CD8-positive, alpha-beta T cell (primary cell): ENCODE measurements at regions of chr19 and their contacts with region 1.

Region 1: DNA sequence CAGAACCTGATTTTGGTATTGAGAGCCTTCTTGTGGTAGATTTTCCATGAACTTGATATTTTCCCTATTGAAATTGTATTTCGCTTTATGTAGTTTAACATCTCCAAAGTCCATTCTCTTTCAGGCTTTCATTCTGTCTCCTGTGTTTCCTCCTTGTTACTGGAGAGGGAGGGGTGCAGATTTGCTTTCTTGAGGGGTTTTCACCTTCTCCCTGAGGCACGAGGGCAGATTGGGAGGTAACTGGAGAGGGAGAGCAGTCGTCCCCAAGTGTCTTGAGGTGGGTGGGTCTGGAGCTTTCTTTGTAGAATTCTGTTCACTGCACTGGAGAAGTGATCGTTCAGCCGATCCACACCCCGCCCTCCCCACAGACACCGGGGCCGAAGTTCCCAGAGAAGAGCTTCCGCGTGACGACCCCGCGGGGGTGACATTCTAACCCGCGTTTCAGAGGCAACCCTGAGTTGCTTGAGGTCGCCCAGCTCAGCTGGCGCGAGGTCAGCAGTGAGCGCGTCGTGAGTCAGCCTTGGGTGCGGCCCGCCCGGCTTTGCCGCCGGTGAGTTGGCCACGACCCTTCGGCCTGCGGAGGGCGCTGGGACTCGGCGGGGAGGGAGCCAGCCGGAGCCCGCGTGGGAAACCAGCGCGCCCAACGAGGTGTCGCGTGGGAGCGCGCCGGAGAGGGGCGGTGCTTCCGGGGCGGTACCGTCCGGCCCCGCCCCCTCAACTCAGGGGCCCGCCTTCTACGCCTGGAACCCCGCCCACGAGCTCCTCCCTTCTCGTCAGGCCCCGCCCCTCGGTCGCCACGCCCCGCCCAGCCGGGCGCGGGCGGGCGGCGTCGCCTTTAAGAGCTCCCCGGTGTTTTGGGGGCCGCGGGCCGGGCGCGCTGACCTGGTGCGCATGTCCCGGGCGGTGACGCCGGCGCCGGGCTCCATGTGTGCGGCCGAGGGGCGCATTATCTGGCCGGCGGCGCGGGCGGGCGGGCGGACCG is at the start of gene GATAD2A:
- DNase-seq: peak; percentile 81 to 98 (median 92)
- ATAC-seq: peak; percentile 89
- H3K4me3 ChIP-seq: peak within 1 kb of the TSS; percentile 67 to 85
- H3K4me3 Mint-ChIP-seq: peak within 1 kb of the TSS; percentile 97
- H3K27ac ChIP-seq: peak within 1 kb of the TSS; percentile 70 to 86
- H3K27ac Mint-ChIP-seq: peak within 1 kb of the TSS; percentile 89
- H3K4me1 ChIP-seq: peaks cover 44% of the 10 kb centered on the region
- H3K4me1 Mint-ChIP-seq: peaks cover 62% of the 10 kb centered on the region
- H3K27me3 ChIP-seq: no peaks in the 10 kb centered on the region
- H3K27me3 Mint-ChIP-seq: no peaks in the 10 kb centered on the region
- CTCF ChIP-seq: no peak
- total RNA-seq, gene GATAD2A: 135 to 142 TPM

Region 2: GRCh38 chr19:18995804-18996241 is 409.3 kb before region 1 on chr19:
- CTCF ChIA-PET with region 1: no interaction called
- POLR2A ChIA-PET with region 1: no interaction called
- intact Hi-C with region 1: no loop called
- DNase-seq: peak in 2 of 9 experiments; percentile 15 to 27
- ATAC-seq: no peak
- H3K4me3 ChIP-seq: no peak overlapping the region
- H3K4me3 Mint-ChIP-seq: no peak overlapping the region
- H3K27ac ChIP-seq: no peak overlapping the region
- H3K27ac Mint-ChIP-seq: no peak overlapping the region
- H3K4me1 ChIP-seq: peaks cover 21% of the 10 kb centered on the region
- H3K4me1 Mint-ChIP-seq: peaks cover 23% of the 10 kb centered on the region
- H3K27me3 ChIP-seq: no peaks in the 10 kb centered on the region
- H3K27me3 Mint-ChIP-seq: no peaks in the 10 kb centered on the region
- CTCF ChIP-seq: no peak

Region 3: GRCh38 chr19:19063183-19064097 is 341.7 kb before region 1 on chr19 and contains the start of gene SLC25A42:
- CTCF ChIA-PET with region 1: no interaction called
- POLR2A ChIA-PET with region 1: no interaction called
- intact Hi-C with region 1: loop called in 1 of 2 experiments (anchors 5 kb)
- DNase-seq: peak; percentile 97 to 100 (median 99)
- ATAC-seq: peak; percentile 90
- H3K4me3 ChIP-seq: peak within 1 kb of the TSS; percentile 61 to 87
- H3K4me3 Mint-ChIP-seq: peak within 1 kb of the TSS; percentile 89
- H3K27ac ChIP-seq: peak within 1 kb of the TSS; percentile 47 to 77
- H3K27ac Mint-ChIP-seq: peak within 1 kb of the TSS; percentile 88
- H3K4me1 ChIP-seq: peaks cover 23% of the 10 kb centered on the region
- H3K4me1 Mint-ChIP-seq: peaks cover 32% of the 10 kb centered on the region
- H3K27me3 ChIP-seq: no peaks in the 10 kb centered on the region
- H3K27me3 Mint-ChIP-seq: no peaks in the 10 kb centered on the region
- CTCF ChIP-seq: no peak
- total RNA-seq, gene SLC25A42: 8.3 to 10.6 TPM

Region 4: GRCh38 chr19:19320362-19321142 is 84.6 kb before region 1 on chr19 and contains the starts of genes MAU2 and SUGP1:
- CTCF ChIA-PET with region 1: no interaction called
- POLR2A ChIA-PET with region 1: interaction called, 3 read pairs
- intact Hi-C with region 1: loop called (anchors 1 kb)
- DNase-seq: peak; percentile 81 to 95 (median 88)
- ATAC-seq: peak; percentile 90
- H3K4me3 ChIP-seq: peak within 1 kb of the TSS; percentile 88 to 94
- H3K4me3 Mint-ChIP-seq: peak within 1 kb of the TSS; percentile 99
- H3K27ac ChIP-seq: peak within 1 kb of the TSS; percentile 88 to 97
- H3K27ac Mint-ChIP-seq: peak within 1 kb of the TSS; percentile 99
- H3K4me1 ChIP-seq: peaks cover 35% of the 10 kb centered on the region
- H3K4me1 Mint-ChIP-seq: peaks cover 40% of the 10 kb centered on the region
- H3K27me3 ChIP-seq: no peaks in the 10 kb centered on the region
- H3K27me3 Mint-ChIP-seq: no peaks in the 10 kb centered on the region
- CTCF ChIP-seq: no peak
- total RNA-seq, gene MAU2: 137 to 139 TPM
- total RNA-seq, gene SUGP1: 60.9 to 68.2 TPM

Region 5: GRCh38 chr19:19361075-19361594 is 44.0 kb before region 1 on chr19:
- CTCF ChIA-PET with region 1: interaction called, 16 read pairs
- POLR2A ChIA-PET with region 1: interaction called, 19 read pairs
- intact Hi-C with region 1: no loop called
- DNase-seq: peak; percentile 28 to 88 (median 69)
- ATAC-seq: peak; percentile 64
- H3K4me3 ChIP-seq: no peak overlapping the region
- H3K4me3 Mint-ChIP-seq: peak overlapping the region; percentile 36
- H3K27ac ChIP-seq: no peak overlapping the region
- H3K27ac Mint-ChIP-seq: peak overlapping the region; percentile 23
- H3K4me1 ChIP-seq: peaks cover 27% of the 10 kb centered on the region
- H3K4me1 Mint-ChIP-seq: peaks cover 37% of the 10 kb centered on the region
- H3K27me3 ChIP-seq: no peaks in the 10 kb centered on the region
- H3K27me3 Mint-ChIP-seq: no peaks in the 10 kb centered on the region
- CTCF ChIP-seq: peak; percentile 72

Region 6: GRCh38 chr19:19366612-19367396 is 38.4 kb before region 1 on chr19:
- CTCF ChIA-PET with region 1: interaction called, 16 read pairs
- POLR2A ChIA-PET with region 1: interaction called, 19 read pairs
- intact Hi-C with region 1: loop called (anchors 1 kb)
- DNase-seq: peak; percentile 35 to 85 (median 66)
- ATAC-seq: peak; percentile 57
- H3K4me3 ChIP-seq: no peak overlapping the region
- H3K4me3 Mint-ChIP-seq: peak overlapping the region; percentile 53
- H3K27ac ChIP-seq: no peak overlapping the region
- H3K27ac Mint-ChIP-seq: no peak overlapping the region
- H3K4me1 ChIP-seq: peaks cover 23% of the 10 kb centered on the region
- H3K4me1 Mint-ChIP-seq: peaks cover 16% of the 10 kb centered on the region
- H3K27me3 ChIP-seq: no peaks in the 10 kb centered on the region
- H3K27me3 Mint-ChIP-seq: no peaks in the 10 kb centered on the region
- CTCF ChIP-seq: peak; percentile 81

Region 7: GRCh38 chr19:19385108-19385899 is 19.9 kb before region 1 on chr19:
- CTCF ChIA-PET with region 1: interaction called, 8 read pairs
- POLR2A ChIA-PET with region 1: interaction called, 20 read pairs
- intact Hi-C with region 1: loop called (anchors 1 kb)
- DNase-seq: peak; percentile 99 to 100 (median 99)
- ATAC-seq: peak; percentile 86
- H3K4me3 ChIP-seq: peak overlapping the region; percentile 73 to 84
- H3K4me3 Mint-ChIP-seq: peak overlapping the region; percentile 93
- H3K27ac ChIP-seq: peak overlapping the region; percentile 71 to 88
- H3K27ac Mint-ChIP-seq: peak overlapping the region; percentile 92
- H3K4me1 ChIP-seq: peaks cover 45% of the 10 kb centered on the region
- H3K4me1 Mint-ChIP-seq: peaks cover 39% of the 10 kb centered on the region
- H3K27me3 ChIP-seq: no peaks in the 10 kb centered on the region
- H3K27me3 Mint-ChIP-seq: no peaks in the 10 kb centered on the region
- CTCF ChIP-seq: no peak

Region 8: DNA sequence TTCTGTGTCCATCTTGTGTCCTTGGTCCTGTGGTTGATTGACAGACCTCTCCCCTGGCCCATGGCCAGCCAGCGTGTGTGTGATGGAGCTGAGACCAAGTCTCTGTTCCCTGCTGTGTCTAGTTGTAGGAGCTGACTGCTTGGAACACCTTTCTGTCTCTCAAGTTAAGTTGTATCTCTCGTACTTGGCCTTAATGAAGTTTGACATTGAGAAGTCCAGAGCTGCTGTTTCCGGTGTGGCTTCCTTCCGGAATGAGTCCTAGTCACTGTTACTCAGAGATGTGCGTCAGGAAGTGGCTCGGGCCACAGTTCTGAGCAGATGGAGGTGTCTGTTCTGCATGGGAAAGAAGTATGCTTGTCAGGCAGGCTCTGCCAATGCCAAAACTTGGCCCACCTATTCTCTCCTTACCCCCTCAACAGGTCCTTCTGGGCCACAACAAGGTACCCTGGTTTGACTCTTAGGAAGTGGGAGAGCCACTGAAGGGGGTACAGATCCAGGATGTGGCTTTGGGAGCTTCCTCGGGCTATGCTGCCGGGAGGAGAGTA is 54.6 kb after region 1 on chr19:
- CTCF ChIA-PET with region 1: interaction called, 3 read pairs
- POLR2A ChIA-PET with region 1: interaction called, 11 read pairs
- intact Hi-C with region 1: loop called in 1 of 2 experiments (anchors 1 kb)
- DNase-seq: peak in 8 of 9 experiments; percentile 54 to 90 (median 74)
- ATAC-seq: peak; percentile 63
- H3K4me3 ChIP-seq: peak overlapping the region; percentile 44 to 47
- H3K4me3 Mint-ChIP-seq: peak overlapping the region; percentile 85
- H3K27ac ChIP-seq: peak overlapping the region; percentile 67 to 96
- H3K27ac Mint-ChIP-seq: peak overlapping the region; percentile 98
- H3K4me1 ChIP-seq: peaks cover 83% of the 10 kb centered on the region
- H3K4me1 Mint-ChIP-seq: peaks cover 86% of the 10 kb centered on the region
- H3K27me3 ChIP-seq: no peaks in the 10 kb centered on the region
- H3K27me3 Mint-ChIP-seq: no peaks in the 10 kb centered on the region
- CTCF ChIP-seq: no peak

Region 9: GRCh38 chr19:19538061-19538784 is 133.1 kb after region 1 on chr19 and contains the start of gene CILP2:
- CTCF ChIA-PET with region 1: no interaction called
- POLR2A ChIA-PET with region 1: no interaction called
- intact Hi-C with region 1: no loop called
- DNase-seq: peak in 5 of 9 experiments; percentile 48 to 66 (median 64)
- ATAC-seq: no peak
- H3K4me3 ChIP-seq: peak within 1 kb of the TSS; percentile 15 to 34
- H3K4me3 Mint-ChIP-seq: peak within 1 kb of the TSS; percentile 67
- H3K27ac ChIP-seq: no peak within 1 kb of the TSS
- H3K27ac Mint-ChIP-seq: peak within 1 kb of the TSS; percentile 41
- H3K4me1 ChIP-seq: peaks cover 39% of the 10 kb centered on the region
- H3K4me1 Mint-ChIP-seq: peaks cover 27% of the 10 kb centered on the region
- H3K27me3 ChIP-seq: peaks cover 0 to 2% of the 10 kb centered on the region in 2 experiments
- H3K27me3 Mint-ChIP-seq: no peaks in the 10 kb centered on the region
- CTCF ChIP-seq: no peak
- total RNA-seq, gene CILP2: 0.71 to 0.81 TPM